ENCODE measurements at regions of chr2 and their contacts with region 1.

Region 1: DNA sequence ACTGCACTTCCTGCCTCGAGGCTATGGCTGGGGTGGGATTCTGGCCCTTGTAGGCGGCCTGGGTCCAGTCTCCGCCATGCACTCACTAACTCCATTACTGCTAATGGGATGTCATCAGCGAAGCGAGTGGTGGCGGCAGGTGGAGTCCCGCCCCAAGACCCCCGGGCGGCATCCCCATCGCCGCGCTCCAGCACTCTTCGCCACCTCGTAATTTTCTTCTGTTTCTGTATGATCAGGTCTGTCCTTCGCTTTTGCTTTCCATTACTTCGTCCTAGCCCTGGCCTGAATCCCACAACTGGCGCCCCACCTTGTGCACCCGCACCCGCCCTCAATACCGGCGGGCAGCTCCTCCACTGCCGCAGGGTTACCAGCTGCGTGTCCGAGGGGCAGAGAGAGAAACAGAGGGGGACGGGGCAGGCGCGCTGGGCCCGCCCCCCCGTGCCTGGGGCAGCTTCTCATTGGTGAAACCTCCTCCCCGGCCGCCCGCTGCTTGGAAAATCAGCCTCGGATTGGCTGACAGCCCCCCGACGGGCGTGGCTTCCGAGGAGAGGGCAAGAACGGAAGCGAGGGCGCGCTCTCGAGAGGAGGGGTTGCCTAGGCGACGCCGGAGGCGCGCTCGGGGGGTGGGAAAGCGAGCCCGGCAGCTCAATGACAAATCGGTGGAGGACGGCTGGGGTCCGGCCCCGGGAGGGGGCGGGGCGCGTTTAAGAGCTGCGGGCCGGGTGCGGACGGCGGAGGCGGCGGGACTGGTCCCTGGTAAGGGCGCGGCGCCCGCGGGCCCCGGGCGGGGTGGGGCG is at the start of gene RALB:
- DNase-seq: peak; percentile 100
- H3K4me3 Mint-ChIP-seq: peak within 1 kb of the TSS; percentile 99
- H3K27ac Mint-ChIP-seq: peak within 1 kb of the TSS; percentile 96
- H3K4me1 Mint-ChIP-seq: peaks cover 70% of the 10 kb centered on the region
- H3K27me3 Mint-ChIP-seq: peaks cover 4% of the 10 kb centered on the region
- total RNA-seq, gene RALB: 72.1 and 80.0 TPM in 2 replicates

Region 2: DNA sequence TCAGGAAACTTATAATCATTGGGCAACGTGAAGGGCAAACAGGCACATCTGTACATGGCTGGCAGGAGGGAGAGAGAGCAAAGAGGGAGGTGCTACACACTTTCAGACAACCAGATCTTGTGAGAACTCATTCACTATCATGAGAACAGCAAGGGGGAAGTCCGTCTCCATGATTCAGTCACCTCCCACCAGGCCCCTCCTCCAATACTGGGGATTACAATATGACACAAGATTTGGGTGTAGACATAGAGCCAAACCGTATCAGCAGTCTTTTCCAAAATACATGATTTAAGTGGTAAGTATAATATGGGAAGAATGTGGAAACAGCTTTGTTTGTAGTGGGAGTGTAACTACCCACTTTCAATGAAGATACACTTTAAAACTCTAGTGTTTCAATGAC is 174.5 kb before region 1 on chr2:
- intact Hi-C with region 1: no loop called
- DNase-seq: no peak
- H3K4me3 Mint-ChIP-seq: no peak overlapping the region
- H3K27ac Mint-ChIP-seq: no peak overlapping the region
- H3K4me1 Mint-ChIP-seq: no peaks in the 10 kb centered on the region
- H3K27me3 Mint-ChIP-seq: no peaks in the 10 kb centered on the region

Region 3: DNA sequence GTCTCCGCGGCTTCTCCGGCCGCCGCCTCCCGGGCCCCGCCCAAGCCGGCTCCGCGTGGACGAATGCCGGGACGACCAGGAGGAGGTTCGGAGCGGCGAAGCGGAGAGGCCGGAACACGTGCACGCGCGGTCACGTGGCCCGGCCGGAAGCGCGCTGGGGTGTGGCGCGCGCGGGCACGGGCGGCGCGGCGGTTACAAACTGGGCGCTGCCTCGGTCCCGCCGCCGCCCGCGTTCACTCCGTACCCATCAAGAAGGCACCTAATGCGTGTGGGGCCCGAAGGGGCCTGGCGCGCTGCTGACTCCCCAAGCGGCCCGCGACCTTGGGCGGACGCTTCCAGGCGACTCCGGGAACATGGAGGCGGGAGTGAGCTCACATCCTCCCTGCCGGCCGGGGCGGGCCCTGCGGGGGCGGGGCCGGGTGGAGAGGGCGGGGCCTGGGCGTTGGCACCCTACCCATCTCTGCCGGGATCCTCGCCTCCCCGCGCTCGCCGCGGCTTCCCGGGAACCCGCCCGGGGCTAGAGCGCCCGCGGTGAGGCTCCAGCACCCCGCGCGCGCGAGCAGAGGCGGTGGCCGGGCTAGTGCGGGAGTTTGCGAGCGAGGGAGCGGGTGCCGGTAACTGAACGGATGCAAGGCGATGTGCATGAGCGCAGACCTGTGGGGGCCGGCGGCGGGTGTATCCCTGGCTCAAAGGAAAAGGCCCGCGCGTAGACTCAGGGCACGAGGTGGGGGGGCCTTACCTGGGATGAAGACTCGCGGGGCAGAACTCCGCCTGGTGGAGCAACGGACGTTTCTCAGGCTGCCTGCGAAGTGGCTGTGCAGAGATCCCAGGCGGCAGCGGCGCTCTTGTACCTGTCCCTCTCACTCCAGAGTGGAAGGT is 29.1 kb before region 1 on chr2 and contains the start of gene TMEM185B:
- intact Hi-C with region 1: loop called (anchors 2 kb)
- DNase-seq: peak; percentile 98
- H3K4me3 Mint-ChIP-seq: peak within 1 kb of the TSS; percentile 87
- H3K27ac Mint-ChIP-seq: peak within 1 kb of the TSS; percentile 92
- H3K4me1 Mint-ChIP-seq: peaks cover 59% of the 10 kb centered on the region
- H3K27me3 Mint-ChIP-seq: no peaks in the 10 kb centered on the region
- total RNA-seq, gene TMEM185B: 44.3 and 45.8 TPM in 2 replicates

Region 4: GRCh38 chr2:120267348-120267747 is 14.9 kb after region 1 on chr2:
- intact Hi-C with region 1: loop called (anchors 2 kb)
- DNase-seq: no peak
- H3K4me3 Mint-ChIP-seq: peak overlapping the region; percentile 41
- H3K27ac Mint-ChIP-seq: peak overlapping the region; percentile 93
- H3K4me1 Mint-ChIP-seq: peaks cover 52% of the 10 kb centered on the region
- H3K27me3 Mint-ChIP-seq: no peaks in the 10 kb centered on the region

Region 5: DNA sequence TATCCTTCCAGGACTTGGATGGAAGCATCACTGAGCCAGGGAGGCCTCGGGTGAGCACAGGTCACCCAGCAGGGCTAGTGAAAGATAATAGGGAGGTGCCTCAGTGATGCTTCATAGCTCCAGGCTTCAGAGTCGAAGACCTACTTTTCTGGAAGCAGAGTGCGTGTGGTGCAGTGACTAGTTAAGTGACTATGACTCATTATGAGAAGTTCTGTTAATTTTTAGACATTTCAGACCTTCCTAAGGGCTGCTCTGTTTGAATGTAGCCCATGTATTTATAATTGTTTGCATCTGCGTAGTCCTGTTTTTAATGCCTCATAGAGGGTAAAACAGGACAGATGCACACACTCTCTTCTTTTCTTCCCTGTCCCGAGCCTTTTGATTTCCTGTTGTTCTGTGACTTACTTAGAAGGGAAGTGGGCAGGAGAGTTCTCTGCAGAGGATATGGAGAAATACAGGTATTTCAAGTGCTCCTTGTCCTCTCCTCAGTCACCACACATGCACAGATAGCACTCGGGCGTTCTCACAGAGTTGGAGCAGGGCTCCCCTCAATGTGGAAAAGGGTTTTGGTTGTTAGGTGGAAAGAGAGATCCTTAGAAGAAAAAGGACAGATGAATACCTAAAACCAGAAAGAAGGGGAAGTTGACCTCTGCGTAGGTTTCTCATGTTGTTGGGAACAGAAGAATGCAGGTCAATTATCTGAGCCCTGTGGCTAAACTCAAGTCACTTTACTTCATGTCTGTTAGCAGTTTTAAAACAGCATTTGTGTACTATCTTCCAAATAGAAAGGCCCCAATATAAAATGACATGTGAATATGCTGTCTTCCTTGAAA is 35.0 kb after region 1 on chr2:
- intact Hi-C with region 1: loop called (anchors 2 kb)
- DNase-seq: peak; percentile 73
- H3K4me3 Mint-ChIP-seq: peak overlapping the region; percentile 66
- H3K27ac Mint-ChIP-seq: peak overlapping the region; percentile 89
- H3K4me1 Mint-ChIP-seq: peaks cover 63% of the 10 kb centered on the region
- H3K27me3 Mint-ChIP-seq: no peaks in the 10 kb centered on the region